Right ventricle myocardium superior (tissue), 1 donor: ENCODE measurements at regions of chr15 and their contacts with region 1.

Region 1: DNA sequence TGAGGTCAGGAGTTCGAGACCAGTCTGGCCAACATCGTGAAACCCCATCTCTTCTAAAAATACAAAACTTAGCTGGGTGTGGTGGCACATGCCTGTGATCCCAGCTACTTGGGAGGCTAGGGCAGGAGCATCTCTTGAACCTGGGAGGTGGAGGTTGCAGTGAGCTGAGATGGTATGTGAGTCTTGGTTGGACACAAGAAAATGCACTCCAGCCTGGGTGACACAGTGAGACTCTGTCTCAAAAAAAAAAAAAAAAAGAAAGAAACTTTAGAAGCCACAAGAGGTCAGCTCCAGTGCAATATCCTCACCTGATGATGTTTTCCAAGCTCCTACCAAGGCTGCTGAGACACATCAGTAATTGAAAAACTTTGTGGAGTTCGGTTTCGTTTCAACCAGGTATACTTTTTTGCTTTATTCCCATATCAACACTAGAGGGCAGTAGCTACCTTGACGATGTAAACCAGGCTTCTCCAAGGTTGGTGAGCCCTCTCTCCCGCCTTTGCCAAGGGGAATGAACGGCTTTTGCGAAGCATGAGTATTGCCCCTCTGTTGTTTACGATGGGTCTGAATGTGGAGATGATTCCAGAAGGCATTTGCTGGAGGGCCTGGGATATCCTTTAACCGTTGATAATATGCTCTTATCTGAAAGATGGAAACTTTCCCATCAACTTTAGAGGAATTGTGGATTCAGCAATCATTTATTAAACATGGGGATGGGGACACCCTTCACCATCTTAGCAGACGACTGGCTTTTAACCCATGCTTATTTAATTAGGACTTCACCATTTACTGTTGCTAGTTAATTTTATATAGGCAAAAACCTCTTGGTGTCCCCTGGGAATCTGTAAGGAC is 202.8 kb downstream of the SV2B start:
- DNase-seq: no peak
- ATAC-seq: peak; percentile 89

Region 2: GRCh38 chr15:91357011-91357410 is 54.2 kb after region 1 on chr15:
- intact Hi-C with region 1: no loop called
- DNase-seq: no peak
- ATAC-seq: no peak

Region 3: GRCh38 chr15:91522663-91523332 is 220.0 kb after region 1 on chr15:
- intact Hi-C with region 1: loop called (anchors 5 kb)
- DNase-seq: no peak
- ATAC-seq: peak; percentile 66

Region 4: GRCh38 chr15:91852741-91853510 is 550.1 kb after region 1 on chr15:
- intact Hi-C with region 1: loop called (anchors 5 kb)
- DNase-seq: peak; percentile 89
- ATAC-seq: peak; percentile 86

Region 5: GRCh38 chr15:92077353-92078085 is 774.7 kb after region 1 on chr15:
- intact Hi-C with region 1: loop called (anchors 5 kb)
- DNase-seq: peak; percentile 83
- ATAC-seq: peak; percentile 78

Region 6: GRCh38 chr15:92226014-92226612 is 923.3 kb after region 1 on chr15:
- intact Hi-C with region 1: loop called (anchors 10 kb)
- DNase-seq: no peak
- ATAC-seq: peak; percentile 87